ENCODE measurements at regions of chr4 and their contacts with region 1.

Region 1: DNA sequence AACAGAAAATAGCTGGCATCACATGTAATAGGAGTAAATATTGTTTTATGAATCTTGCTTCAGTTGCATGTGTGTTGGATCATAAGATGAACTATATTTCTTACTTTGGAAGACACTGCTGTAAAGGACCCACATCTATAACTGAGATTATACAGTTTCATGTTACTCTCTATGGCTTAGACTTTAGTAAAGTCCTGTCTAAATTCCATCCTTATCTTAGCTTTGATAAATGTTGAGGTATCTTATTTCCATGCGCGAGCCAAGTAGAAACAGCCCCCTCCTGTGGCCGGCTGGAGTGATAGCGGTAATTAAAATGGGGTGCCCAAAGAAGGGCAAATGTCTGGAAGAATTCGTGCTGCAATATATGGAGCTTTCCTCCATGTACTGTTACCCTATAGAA is 43.0 kb downstream of the CCDC158 start:
- DNase-seq: peak; percentile 58
- H3K4me3 ChIP-seq: no peak overlapping the region; a peak in 1 of 4 replicates
- H3K27ac ChIP-seq: no peak overlapping the region
- H3K4me1 ChIP-seq: peaks cover 0 to 7% of the 10 kb centered on the region in 2 experiments; a peak in 2 of 4 replicates
- H3K27me3 ChIP-seq: no peaks in the 10 kb centered on the region
- CTCF ChIP-seq: peak; percentile 70
- EP300 ChIP-seq: no peak
- RAD21 ChIP-seq: peak; percentile 85

Region 2: DNA sequence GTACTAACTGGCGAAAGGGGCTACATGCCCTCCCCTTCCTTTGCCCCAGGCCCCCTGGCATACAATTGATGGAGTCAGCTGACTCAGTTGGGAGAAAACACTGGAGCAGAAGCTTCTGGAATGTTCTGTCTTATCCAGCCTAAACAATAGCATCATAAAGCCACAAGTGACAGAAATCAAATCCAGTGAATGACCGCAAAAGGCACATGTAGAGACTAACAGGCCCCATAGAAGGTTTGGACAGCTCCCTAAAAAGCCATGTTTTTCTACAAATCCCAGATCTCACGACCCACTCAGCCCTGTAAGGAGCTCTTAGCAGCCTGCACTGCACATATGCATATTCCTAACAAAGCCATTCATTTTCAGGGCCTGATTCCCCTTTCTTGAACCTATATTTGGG is 189.4 kb before region 1 on chr4:
- CTCF ChIA-PET with region 1: interaction called, 10 read pairs
- POLR2A ChIA-PET with region 1: no interaction called
- DNase-seq: no peak
- H3K4me3 ChIP-seq: no peak overlapping the region
- H3K27ac ChIP-seq: no peak overlapping the region
- H3K4me1 ChIP-seq: no peaks in the 10 kb centered on the region
- H3K27me3 ChIP-seq: no peaks in the 10 kb centered on the region
- CTCF ChIP-seq: no peak
- EP300 ChIP-seq: no peak
- RAD21 ChIP-seq: no peak

Region 3: DNA sequence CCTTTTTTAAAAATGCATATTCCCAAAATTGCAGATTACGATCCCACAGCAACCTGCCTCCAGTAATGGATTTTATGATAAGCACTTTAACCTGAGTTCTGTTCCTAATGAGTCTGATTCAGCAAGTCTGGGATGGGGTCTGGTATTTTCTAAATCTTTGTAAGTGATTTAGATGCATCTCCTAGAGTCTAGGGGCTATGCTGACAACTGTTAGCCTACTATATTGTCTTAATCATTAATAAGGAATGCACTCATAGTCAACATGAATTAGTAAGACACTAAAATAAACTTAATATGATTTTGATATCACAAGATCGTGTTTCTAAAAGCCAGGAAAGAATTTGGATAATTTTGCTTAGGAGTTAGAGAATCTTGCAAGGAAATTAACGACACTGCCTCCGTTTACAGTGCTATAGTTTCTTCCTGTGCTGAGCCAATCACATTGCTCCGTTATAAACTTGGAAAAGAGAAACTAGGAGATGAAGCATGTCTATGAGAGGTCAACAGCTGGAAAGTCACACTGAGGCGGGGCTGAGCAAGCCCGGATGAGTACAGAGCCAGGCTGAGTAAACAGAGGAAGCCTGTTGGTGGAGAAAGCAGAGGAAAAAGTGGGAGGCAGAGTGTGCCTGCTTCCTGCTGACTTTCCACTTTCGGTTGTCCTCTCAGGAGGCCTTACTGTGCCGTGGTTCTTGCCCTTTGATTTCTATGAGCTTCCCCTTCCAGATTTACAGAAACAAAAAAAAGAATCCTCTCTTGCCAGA is 169.7 kb before region 1 on chr4:
- CTCF ChIA-PET with region 1: interaction called, 10 read pairs
- POLR2A ChIA-PET with region 1: no interaction called
- DNase-seq: peak; percentile 32
- H3K4me3 ChIP-seq: peak overlapping the region; percentile 23 to 57
- H3K27ac ChIP-seq: peak overlapping the region; percentile 91 to 96
- H3K4me1 ChIP-seq: peaks cover 25 to 49% of the 10 kb centered on the region in 2 experiments; a peak in 3 of 4 replicates
- H3K27me3 ChIP-seq: no peaks in the 10 kb centered on the region
- CTCF ChIP-seq: no peak
- EP300 ChIP-seq: peak; percentile 37 to 39; a peak in 2 of 4 replicates
- RAD21 ChIP-seq: no peak

Region 4: GRCh38 chr4:76251441-76252270 is 126.3 kb before region 1 on chr4 and contains the start of gene FAM47E:
- CTCF ChIA-PET with region 1: interaction called, 34 read pairs
- POLR2A ChIA-PET with region 1: no interaction called
- DNase-seq: peak; percentile 90
- H3K4me3 ChIP-seq: peak within 1 kb of the TSS; percentile 67 to 72
- H3K27ac ChIP-seq: peak within 1 kb of the TSS; percentile 52 to 81
- H3K4me1 ChIP-seq: peaks cover 0 to 9% of the 10 kb centered on the region in 2 experiments; a peak in 1 of 4 replicates
- H3K27me3 ChIP-seq: peaks cover 9% of the 10 kb centered on the region; the same call in 1 of the 2 replicates
- CTCF ChIP-seq: peak; percentile 59
- EP300 ChIP-seq: peak in 1 of 2 experiments; percentile 38; a peak in 1 of 4 replicates
- RAD21 ChIP-seq: peak; percentile 49
- polyA plus RNA-seq, gene FAM47E: 1.8 and 2.5 TPM in 2 replicates

Region 5: GRCh38 chr4:76305971-76306881 is 71.7 kb before region 1 on chr4 and contains the start of gene STBD1:
- CTCF ChIA-PET with region 1: interaction called, 45 read pairs
- POLR2A ChIA-PET with region 1: no interaction called
- DNase-seq: peak; percentile 86
- H3K4me3 ChIP-seq: peak within 1 kb of the TSS; percentile 92
- H3K27ac ChIP-seq: peak within 1 kb of the TSS; percentile 83 to 92
- H3K4me1 ChIP-seq: peaks cover 10 to 32% of the 10 kb centered on the region in 2 experiments; a peak in 2 of 4 replicates
- H3K27me3 ChIP-seq: no peaks in the 10 kb centered on the region
- CTCF ChIP-seq: no peak
- EP300 ChIP-seq: no peak; a peak in 1 of 4 replicates
- RAD21 ChIP-seq: 0 out of 2 replicates have a peak, but pooled peaks have one; percentile 4
- polyA plus RNA-seq, gene STBD1: 1.6 and 1.8 TPM in 2 replicates

Region 6: DNA sequence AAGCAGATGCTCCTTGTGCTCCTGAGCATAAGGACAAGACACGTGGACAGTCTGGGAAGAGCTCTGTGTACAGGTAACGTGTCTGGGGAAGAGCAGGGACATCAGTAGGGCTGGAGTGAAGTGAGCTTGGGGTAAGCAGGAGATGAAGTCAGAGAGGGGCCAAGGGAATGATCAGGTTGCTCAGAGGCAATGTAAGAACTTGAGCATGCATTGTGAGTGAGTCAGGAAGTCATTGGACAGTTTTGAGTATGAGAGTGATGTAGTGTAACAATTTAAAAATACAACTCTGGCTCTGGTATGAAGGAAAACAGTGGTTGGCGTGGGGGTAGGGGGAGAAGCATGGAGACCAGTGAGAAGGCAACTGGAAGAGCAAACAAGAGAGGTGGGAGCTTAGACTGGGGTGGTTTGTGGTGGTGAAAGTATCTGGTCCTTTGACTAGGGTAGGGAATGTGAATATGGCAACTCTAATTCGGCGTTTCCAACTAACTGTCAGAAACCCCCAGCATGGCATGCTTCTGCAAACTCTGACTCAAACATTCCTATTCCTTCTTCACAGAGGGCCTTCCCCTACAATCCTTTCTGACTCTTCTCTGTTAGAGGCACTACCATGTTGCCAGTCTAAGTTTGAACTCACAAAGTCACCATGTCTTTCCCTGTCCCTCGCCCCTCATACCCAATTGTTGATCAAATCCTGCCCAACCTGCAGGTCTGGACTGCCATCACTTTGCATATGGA is 14.2 kb before region 1 on chr4:
- CTCF ChIA-PET with region 1: interaction called, 23 read pairs
- POLR2A ChIA-PET with region 1: no interaction called
- DNase-seq: no peak
- H3K4me3 ChIP-seq: no peak overlapping the region
- H3K27ac ChIP-seq: no peak overlapping the region
- H3K4me1 ChIP-seq: peaks cover 0 to 11% of the 10 kb centered on the region in 2 experiments; a peak in 1 of 4 replicates
- H3K27me3 ChIP-seq: no peaks in the 10 kb centered on the region
- CTCF ChIP-seq: no peak
- EP300 ChIP-seq: no peak
- RAD21 ChIP-seq: no peak

Measured in SK-N-SH (cell line).